ENCODE measurements at regions of chr14 and their contacts with region 1.

Region 1: GRCh38 chr14:37246427-37246914 is 48.7 kb downstream of the MIPOL1 start:
- DNase-seq: no peak
- H3K4me3 ChIP-seq: no peak overlapping the region
- H3K27ac ChIP-seq: no peak overlapping the region
- H3K4me1 ChIP-seq: no peaks in the 10 kb centered on the region
- H3K27me3 ChIP-seq: no peaks in the 10 kb centered on the region
- CTCF ChIP-seq: peak; percentile 56 to 86 (median 70)
- POLR2A ChIP-seq: no peak

Region 2: GRCh38 chr14:37034410-37035285 is 211.8 kb before region 1 on chr14:
- intact Hi-C with region 1: no loop called
- DNase-seq: no peak
- H3K4me3 ChIP-seq: no peak overlapping the region
- H3K27ac ChIP-seq: no peak overlapping the region
- H3K4me1 ChIP-seq: no peaks in the 10 kb centered on the region
- H3K27me3 ChIP-seq: no peaks in the 10 kb centered on the region
- CTCF ChIP-seq: no peak
- POLR2A ChIP-seq: no peak

Region 3: GRCh38 chr14:37594238-37594914 is 347.9 kb after region 1 on chr14:
- intact Hi-C with region 1: loop called (anchors 5 to 10 kb)
- DNase-seq: peak; percentile 61 to 79 (median 67)
- H3K4me3 ChIP-seq: peak overlapping the region in 3 of 4 donors; percentile 11 to 63 (median 17)
- H3K27ac ChIP-seq: no peak overlapping the region
- H3K4me1 ChIP-seq: peaks cover 12% of the 10 kb centered on the region in 2 donors
- H3K27me3 ChIP-seq: peaks cover 86% of the 10 kb centered on the region
- CTCF ChIP-seq: peak; percentile 47 to 74 (median 62)
- POLR2A ChIP-seq: no peak